K562 (cell line): ENCODE measurements at regions of chr6 and their contacts with region 1.

Region 1: GRCh38 chr6:135323202-135323668 is 142.1 kb downstream of the MYB start:
- DNase-seq: peak; percentile 82 to 97 (median 86)
- ATAC-seq: peak; percentile 78
- H3K4me3 ChIP-seq: no peak overlapping the region
- H3K27ac ChIP-seq: peak overlapping the region; percentile 91
- H3K4me1 ChIP-seq: peaks cover 28 to 77% of the 10 kb centered on the region in 2 experiments
- H3K27me3 ChIP-seq: no peaks in the 10 kb centered on the region
- CTCF ChIP-seq: no peak; a peak in 1 of 6 replicates
- EP300 ChIP-seq: peak; percentile 100
- POLR2A ChIP-seq: no peak
- RAD21 ChIP-seq: peak; percentile 48 to 51; a peak in 3 of 4 replicates

Region 2: GRCh38 chr6:135088818-135089809 is 234.1 kb before region 1 on chr6:
- CTCF ChIA-PET with region 1: no interaction called
- POLR2A ChIA-PET with region 1: no interaction called
- in situ Hi-C with region 1: no loop called
- intact Hi-C with region 1: loop called (anchors 10 kb)
- DNase-seq: peak; percentile 52 to 60 (median 58)
- ATAC-seq: peak; percentile 63
- H3K4me3 ChIP-seq: no peak overlapping the region
- H3K27ac ChIP-seq: peak overlapping the region; percentile 19; the same call in 1 of the 3 replicates
- H3K4me1 ChIP-seq: peaks cover 29 to 86% of the 10 kb centered on the region in 2 experiments
- H3K27me3 ChIP-seq: no peaks in the 10 kb centered on the region
- CTCF ChIP-seq: peak in 2 of 3 experiments; percentile 55 to 60; a peak in 5 of 6 replicates
- EP300 ChIP-seq: 0 out of 2 replicates have a peak, but pooled peaks have one; percentile 13
- POLR2A ChIP-seq: no peak
- RAD21 ChIP-seq: no peak; a peak in 1 of 4 replicates

Region 3: DNA sequence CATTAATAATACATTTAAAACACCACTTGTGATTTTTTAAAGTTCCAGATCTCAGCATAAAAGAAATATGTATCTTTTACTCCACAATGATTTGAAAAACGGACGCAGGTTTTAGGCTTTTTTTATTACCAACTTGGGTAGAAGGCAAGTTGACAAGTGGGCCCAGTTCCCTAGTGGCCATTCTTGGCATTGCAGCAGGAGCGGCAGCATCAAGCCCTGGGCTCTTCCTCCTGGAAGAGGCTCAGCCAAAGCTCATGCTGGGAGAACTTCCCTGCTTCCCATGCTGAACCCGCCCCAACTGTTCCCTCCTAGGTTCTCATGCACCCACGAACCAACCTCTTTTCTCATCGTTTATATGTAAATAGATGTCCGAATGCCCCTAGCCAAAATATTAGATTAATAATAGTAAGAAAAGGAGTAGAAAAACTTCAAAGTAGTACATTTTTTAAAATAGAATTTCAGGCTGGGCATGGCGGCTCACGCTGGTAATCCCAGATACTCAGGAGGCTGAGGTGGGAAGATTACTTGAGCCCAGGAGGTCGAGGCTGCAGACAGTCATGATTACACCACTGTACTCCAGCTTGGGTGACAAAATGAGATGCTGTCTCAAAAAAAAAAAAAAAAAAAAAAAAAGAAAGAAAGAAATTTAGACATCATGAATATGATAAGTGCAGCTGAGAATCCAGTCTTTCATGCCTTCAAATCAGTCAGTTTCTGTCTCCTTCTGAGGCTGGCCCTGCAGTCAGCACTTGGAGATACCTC is 160.4 kb before region 1 on chr6:
- CTCF ChIA-PET with region 1: no interaction called
- POLR2A ChIA-PET with region 1: no interaction called
- in situ Hi-C with region 1: no loop called
- intact Hi-C with region 1: no loop called
- DNase-seq: peak; percentile 72 to 86 (median 74)
- ATAC-seq: peak; percentile 89
- H3K4me3 ChIP-seq: no peak overlapping the region
- H3K27ac ChIP-seq: no peak overlapping the region
- H3K4me1 ChIP-seq: peaks cover 0 to 17% of the 10 kb centered on the region in 2 experiments; a peak in 3 of 5 replicates
- H3K27me3 ChIP-seq: no peaks in the 10 kb centered on the region
- CTCF ChIP-seq: peak; percentile 72 to 91 (median 73)
- EP300 ChIP-seq: no peak
- POLR2A ChIP-seq: no peak
- RAD21 ChIP-seq: no peak; a peak in 1 of 4 replicates

Region 4: DNA sequence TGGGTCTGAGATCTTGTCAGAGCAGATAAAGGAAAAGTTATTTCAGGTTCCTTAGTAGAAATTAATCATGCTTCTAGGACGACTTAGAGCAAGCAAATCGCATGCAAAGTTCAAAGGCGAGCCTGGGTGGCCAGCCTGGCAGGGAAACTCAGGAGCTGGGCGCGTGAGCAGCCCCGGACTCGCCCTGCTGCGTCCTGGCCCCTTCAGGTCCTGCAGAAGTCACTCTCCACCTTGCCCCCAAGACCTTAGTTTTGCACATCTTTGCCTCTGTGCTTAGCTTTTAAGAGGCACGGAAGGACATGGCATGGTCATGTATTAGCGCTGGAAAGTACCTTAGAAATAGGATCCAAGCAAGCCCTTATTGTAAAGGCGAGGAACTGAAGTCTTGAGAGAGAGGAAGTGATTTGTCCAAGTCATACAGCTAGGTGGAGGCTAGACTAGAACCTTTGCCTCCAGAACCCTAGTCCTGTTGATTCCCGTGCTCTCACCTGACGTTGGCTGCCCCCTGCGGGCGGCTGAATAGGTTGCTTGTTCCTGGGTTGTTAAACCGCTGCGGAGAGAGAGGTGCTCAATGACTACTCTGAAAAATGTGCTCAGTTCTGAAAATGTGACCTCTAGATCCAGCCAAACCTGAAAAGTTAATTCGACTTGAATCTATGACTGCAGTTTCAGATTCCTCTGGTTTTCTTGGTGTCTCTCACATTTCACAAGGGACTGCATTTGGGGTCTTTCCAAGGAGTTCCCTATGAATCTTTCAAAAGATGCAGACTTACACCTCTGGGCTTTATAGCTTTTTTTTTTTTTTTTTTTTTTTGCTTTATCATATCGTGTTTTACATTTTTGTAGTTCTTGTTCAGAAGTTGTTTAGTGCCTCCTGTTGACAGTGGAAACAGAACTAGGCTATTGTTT is 139.4 kb before region 1 on chr6:
- CTCF ChIA-PET with region 1: no interaction called
- POLR2A ChIA-PET with region 1: interaction called, 3 read pairs
- in situ Hi-C with region 1: no loop called
- intact Hi-C with region 1: loop called (anchors 2 kb)
- DNase-seq: peak; percentile 66 to 96 (median 76)
- ATAC-seq: peak; percentile 81
- H3K4me3 ChIP-seq: peak overlapping the region; percentile 71
- H3K27ac ChIP-seq: peak overlapping the region; percentile 73
- H3K4me1 ChIP-seq: peaks cover 23 to 26% of the 10 kb centered on the region in 2 experiments
- H3K27me3 ChIP-seq: no peaks in the 10 kb centered on the region
- CTCF ChIP-seq: peak; percentile 87 to 92 (median 92)
- EP300 ChIP-seq: peak; percentile 10
- POLR2A ChIP-seq: no peak
- RAD21 ChIP-seq: peak; percentile 85 to 87

Region 5: GRCh38 chr6:135233686-135234489 is 89.3 kb before region 1 on chr6:
- CTCF ChIA-PET with region 1: no interaction called
- POLR2A ChIA-PET with region 1: interaction called, 3 read pairs
- in situ Hi-C with region 1: no loop called
- intact Hi-C with region 1: loop called (anchors 5 kb)
- DNase-seq: no peak
- ATAC-seq: peak; percentile 18; the same call in 2 of the 3 replicates
- H3K4me3 ChIP-seq: no peak overlapping the region
- H3K27ac ChIP-seq: peak overlapping the region; percentile 31; the same call in 1 of the 3 replicates
- H3K4me1 ChIP-seq: peaks cover 17 to 41% of the 10 kb centered on the region in 2 experiments
- H3K27me3 ChIP-seq: no peaks in the 10 kb centered on the region
- CTCF ChIP-seq: no peak
- EP300 ChIP-seq: no peak
- POLR2A ChIP-seq: no peak
- RAD21 ChIP-seq: no peak

Region 6: GRCh38 chr6:135280375-135281136 is 42.7 kb before region 1 on chr6:
- CTCF ChIA-PET with region 1: no interaction called
- POLR2A ChIA-PET with region 1: interaction called, 3 read pairs
- in situ Hi-C with region 1: no loop called
- intact Hi-C with region 1: loop called (anchors 1 kb)
- DNase-seq: peak in 2 of 4 experiments; percentile 33 to 62
- ATAC-seq: peak; percentile 71
- H3K4me3 ChIP-seq: no peak overlapping the region
- H3K27ac ChIP-seq: peak overlapping the region; percentile 29; the same call in 2 of the 3 replicates
- H3K4me1 ChIP-seq: peaks cover 4 to 35% of the 10 kb centered on the region in 2 experiments; a peak in 4 of 5 replicates
- H3K27me3 ChIP-seq: no peaks in the 10 kb centered on the region
- CTCF ChIP-seq: no peak
- EP300 ChIP-seq: peak; percentile 50
- POLR2A ChIP-seq: no peak
- RAD21 ChIP-seq: no peak

Region 7: DNA sequence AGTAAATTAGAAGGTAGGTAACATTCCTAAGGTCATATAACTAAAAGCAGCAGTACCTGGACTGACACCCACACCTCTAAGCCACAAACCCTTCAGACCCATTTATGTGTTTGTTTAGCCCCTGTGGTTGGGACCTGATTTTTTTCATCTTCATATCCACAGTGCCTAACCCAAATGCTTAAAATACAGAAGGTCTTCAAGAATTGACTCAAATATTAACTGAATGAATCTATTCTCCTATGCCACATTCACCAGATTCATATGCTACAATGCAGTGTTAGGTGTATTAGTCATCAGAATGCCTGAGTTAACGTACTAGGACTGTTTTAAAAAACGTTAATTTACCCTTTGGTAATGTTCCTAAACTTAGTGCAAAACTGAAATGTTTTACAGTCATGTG is 49.5 kb after region 1 on chr6:
- CTCF ChIA-PET with region 1: no interaction called
- POLR2A ChIA-PET with region 1: no interaction called
- in situ Hi-C with region 1: no loop called
- intact Hi-C with region 1: no loop called
- DNase-seq: no peak
- ATAC-seq: no peak
- H3K4me3 ChIP-seq: no peak overlapping the region
- H3K27ac ChIP-seq: no peak overlapping the region
- H3K4me1 ChIP-seq: no peaks in the 10 kb centered on the region
- H3K27me3 ChIP-seq: no peaks in the 10 kb centered on the region
- CTCF ChIP-seq: no peak
- EP300 ChIP-seq: no peak
- POLR2A ChIP-seq: no peak
- RAD21 ChIP-seq: no peak

Region 8: DNA sequence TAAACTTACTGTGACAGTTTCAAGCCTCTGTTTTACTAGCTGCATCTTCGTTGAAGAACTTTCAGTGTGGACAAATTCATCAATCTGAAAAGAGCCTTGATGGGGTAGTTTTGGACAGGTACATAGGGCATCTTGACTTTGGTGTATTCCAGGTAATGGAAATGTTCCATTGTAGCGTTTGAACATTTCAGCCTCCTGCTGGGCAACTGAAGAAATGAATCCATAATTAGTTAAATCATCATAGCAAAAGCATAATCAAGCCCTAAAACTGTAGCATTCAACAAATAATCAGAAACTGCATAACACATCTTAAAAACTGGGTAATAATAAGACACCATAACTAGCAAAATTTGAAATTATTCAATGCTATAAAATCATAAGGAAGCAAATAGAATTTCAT is 88.1 kb after region 1 on chr6:
- CTCF ChIA-PET with region 1: no interaction called
- POLR2A ChIA-PET with region 1: no interaction called
- in situ Hi-C with region 1: no loop called
- intact Hi-C with region 1: loop called (anchors 1 kb)
- DNase-seq: peak; percentile 15 to 39 (median 24)
- ATAC-seq: peak; percentile 76
- H3K4me3 ChIP-seq: no peak overlapping the region
- H3K27ac ChIP-seq: no peak overlapping the region
- H3K4me1 ChIP-seq: peaks cover 0 to 7% of the 10 kb centered on the region in 2 experiments; a peak in 3 of 5 replicates
- H3K27me3 ChIP-seq: no peaks in the 10 kb centered on the region
- CTCF ChIP-seq: peak; percentile 14 to 53 (median 47); a peak in 5 of 6 replicates
- EP300 ChIP-seq: no peak
- POLR2A ChIP-seq: no peak
- RAD21 ChIP-seq: peak; percentile 12 to 55; a peak in 2 of 4 replicates